ENCODE measurements at regions of chr22 and their contacts with region 1.

Region 1: GRCh38 chr22:23240639-23241389 is 60.5 kb downstream of the BCR start:
- DNase-seq: no peak
- H3K4me3 ChIP-seq: no peak overlapping the region
- H3K27ac ChIP-seq: no peak overlapping the region
- H3K27me3 ChIP-seq: no peaks in the 10 kb centered on the region
- CTCF ChIP-seq: 0 out of 2 replicates have a peak, but pooled peaks have one; percentile 22

Region 2: GRCh38 chr22:23281406-23282088 is 40.7 kb after region 1 on chr22:
- CTCF ChIA-PET with region 1: interaction called, 12 read pairs
- POLR2A ChIA-PET with region 1: no interaction called
- DNase-seq: peak; percentile 50
- H3K4me3 ChIP-seq: no peak overlapping the region
- H3K27ac ChIP-seq: peak overlapping the region; percentile 52
- H3K27me3 ChIP-seq: no peaks in the 10 kb centered on the region
- CTCF ChIP-seq: peak; percentile 90

Measured in AG04450 (cell line).